GM18951 (cell line): ENCODE measurements at regions of chr11 and their contacts with region 1.

Region 1: DNA sequence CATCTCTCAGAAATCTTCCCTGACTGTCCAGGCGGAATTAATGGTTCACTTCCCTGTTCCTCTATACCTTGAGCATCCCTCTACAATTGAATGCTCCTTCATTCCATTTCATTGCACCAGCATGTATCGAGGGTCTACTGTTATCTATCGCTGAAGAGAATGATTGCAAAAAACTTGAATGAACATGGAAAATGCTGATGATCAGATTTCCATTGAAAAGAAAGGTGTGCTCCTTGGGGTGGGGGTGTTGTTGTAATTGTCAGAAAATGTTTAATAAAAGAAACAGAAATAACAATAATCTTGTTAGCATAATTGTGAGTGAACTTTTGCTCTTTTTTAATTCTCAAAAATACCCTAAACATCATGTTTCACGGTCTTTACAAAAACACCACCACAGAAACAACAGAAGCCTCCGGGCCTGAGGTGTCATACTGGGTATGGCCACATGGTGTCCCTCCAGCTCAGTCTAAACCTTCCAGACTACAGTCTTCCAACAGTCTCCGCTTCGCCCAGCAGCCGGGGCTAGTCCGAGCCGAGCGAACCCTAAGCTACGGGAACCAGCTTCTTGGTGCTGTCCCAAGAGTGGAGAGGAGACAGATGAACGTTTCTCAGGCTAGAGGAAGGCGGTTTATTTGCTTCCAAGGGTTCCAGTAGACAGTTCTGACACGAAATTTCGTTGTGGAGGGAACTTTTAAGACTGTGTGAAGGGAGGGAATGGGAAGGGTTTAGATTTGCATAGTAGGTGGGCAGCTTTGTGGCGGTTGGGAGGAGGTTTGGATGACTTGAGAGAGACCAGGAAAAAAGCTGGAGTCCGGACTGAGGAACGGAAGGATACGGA is 75.8 kb upstream of the ZBED5 start:
- POLR2A ChIP-seq: no peak

Region 2: DNA sequence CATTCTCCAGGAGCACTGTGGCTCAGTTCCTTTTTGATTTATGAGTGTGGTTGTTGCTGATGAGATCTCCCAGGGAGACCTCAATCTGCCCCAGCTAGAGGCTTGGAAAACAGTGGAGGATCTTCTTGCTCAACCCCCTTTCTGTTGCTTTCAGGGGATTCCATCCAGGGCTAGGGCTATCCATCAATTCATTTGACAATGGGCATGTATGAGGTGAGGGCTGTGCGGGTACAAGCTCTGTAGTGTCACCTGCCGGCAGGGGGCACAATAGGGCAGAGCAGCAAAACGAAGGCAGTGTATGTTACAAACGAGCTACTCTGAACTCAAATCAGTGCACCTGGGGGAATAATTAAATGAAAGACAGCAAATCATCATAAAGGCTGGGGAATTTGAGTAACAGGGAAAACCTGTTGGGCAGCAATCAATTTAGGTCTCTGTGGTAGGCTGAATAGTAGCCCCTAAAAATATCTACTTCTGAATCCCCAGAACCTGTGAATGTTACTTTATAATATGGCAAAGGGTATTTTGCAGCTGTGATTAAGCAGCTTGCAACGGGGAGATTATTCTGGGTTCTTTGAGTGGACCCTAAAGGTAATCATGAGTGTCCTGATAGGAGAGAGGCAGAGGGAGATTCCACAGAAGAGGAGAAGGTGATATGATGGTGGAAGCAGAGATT is 94.5 kb after region 1 on chr11:
- in situ Hi-C with region 1: loop called (anchors 10 kb)
- POLR2A ChIP-seq: no peak

Region 3: GRCh38 chr11:11635443-11635842 is 701.8 kb after region 1 on chr11:
- in situ Hi-C with region 1: no loop called
- POLR2A ChIP-seq: no peak